HCT116 (cell line): ENCODE measurements at regions of chr1 and their contacts with region 1.

Region 1: DNA sequence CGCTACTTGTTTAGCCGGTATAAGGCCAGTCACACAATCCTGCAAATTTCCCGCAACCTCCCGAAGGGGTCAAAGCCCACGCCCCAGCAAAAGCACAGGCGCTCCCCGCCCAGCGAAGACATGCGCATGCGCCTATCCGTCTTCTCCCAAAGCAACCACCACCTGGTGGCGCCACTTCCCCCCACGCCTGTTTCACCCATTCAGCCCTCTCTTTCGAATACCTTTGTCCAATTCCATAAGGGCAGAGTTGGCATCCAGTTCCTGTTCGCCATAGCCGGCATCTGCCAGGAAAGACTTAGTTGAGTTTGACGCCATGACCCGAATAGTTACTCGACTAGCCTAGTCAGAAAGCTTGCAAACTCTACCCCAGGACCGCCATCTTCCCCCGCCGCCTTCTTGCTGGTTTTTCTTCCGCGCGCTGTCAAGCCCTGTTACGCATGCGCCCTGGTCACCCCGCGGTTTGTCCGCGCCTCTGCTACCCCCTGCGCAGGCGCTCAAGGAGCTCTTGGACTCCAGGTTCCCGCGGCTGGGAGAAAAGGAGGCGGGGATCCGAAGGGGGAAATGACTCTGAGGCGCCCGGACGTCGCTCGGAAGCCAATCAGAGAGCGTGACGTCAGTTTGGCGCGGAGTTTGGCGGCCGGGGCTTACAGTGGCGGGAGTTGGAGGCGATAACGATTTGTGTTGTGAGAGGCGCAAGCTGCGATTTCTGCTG is at the starts of genes DTL and INTS7:
- DNase-seq: peak; percentile 98
- ATAC-seq: peak; percentile 88
- H3K4me3 ChIP-seq: peak within 1 kb of the TSS; percentile 88
- H3K27ac ChIP-seq: peak within 1 kb of the TSS; percentile 71
- H3K4me1 ChIP-seq: peaks cover 18 to 41% of the 10 kb centered on the region in 2 experiments
- H3K27me3 ChIP-seq: no peaks in the 10 kb centered on the region
- CTCF ChIP-seq: peak in 2 of 3 experiments; percentile 63 to 83; a peak in 5 of 6 replicates
- POLR2A ChIP-seq: peak; percentile 86
- RAD21 ChIP-seq: peak; percentile 25; the same call in 1 of the 2 replicates
- total RNA-seq, gene DTL: 41.0 TPM
- total RNA-seq, gene INTS7: 21.7 TPM

Region 2: GRCh38 chr1:210366767-210367166 is 1668.5 kb before region 1 on chr1:
- CTCF ChIA-PET with region 1: no interaction called
- POLR2A ChIA-PET with region 1: no interaction called
- RAD21 ChIA-PET with region 1: no interaction called
- intact Hi-C with region 1: loop called (anchors 5 kb)
- DNase-seq: no peak
- ATAC-seq: no peak
- H3K4me3 ChIP-seq: no peak overlapping the region
- H3K27ac ChIP-seq: no peak overlapping the region
- H3K4me1 ChIP-seq: no peaks in the 10 kb centered on the region
- H3K27me3 ChIP-seq: no peaks in the 10 kb centered on the region
- CTCF ChIP-seq: no peak
- POLR2A ChIP-seq: no peak
- RAD21 ChIP-seq: no peak

Region 3: GRCh38 chr1:211698161-211699026 is 336.9 kb before region 1 on chr1:
- CTCF ChIA-PET with region 1: interaction called, 42 read pairs
- POLR2A ChIA-PET with region 1: interaction called, 5 read pairs
- RAD21 ChIA-PET with region 1: interaction called, 3 to 4 read pairs
- intact Hi-C with region 1: loop called (anchors 1 kb)
- DNase-seq: peak; percentile 69
- ATAC-seq: peak; percentile 98
- H3K4me3 ChIP-seq: 0 out of 4 replicates have a peak overlapping the region, but pooled peaks of 1 of the 2 experiments have one; percentile 11
- H3K27ac ChIP-seq: no peak overlapping the region
- H3K4me1 ChIP-seq: peaks cover 0 to 12% of the 10 kb centered on the region in 2 experiments; a peak in 2 of 4 replicates
- H3K27me3 ChIP-seq: no peaks in the 10 kb centered on the region
- CTCF ChIP-seq: peak; percentile 99
- POLR2A ChIP-seq: no peak
- RAD21 ChIP-seq: peak; percentile 99

Region 4: DNA sequence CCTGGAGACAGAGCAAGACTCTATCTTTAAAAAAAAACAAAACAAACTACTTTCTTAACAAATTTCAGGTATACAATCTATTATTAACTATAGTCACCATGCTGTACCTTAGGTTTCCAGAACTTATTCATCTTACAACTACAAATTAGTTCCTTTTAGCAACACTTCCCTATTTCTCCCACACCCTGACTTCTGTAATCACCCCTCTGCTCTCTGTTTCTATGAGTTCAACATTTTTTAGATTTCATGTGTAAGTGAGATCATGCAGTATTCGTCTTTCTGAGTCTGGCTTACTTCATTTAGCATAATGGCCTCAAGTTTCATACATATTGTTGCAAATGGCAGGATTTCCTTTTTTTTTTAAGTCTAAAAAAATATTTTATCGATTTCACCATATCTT is 126.8 kb before region 1 on chr1:
- CTCF ChIA-PET with region 1: no interaction called
- POLR2A ChIA-PET with region 1: no interaction called
- RAD21 ChIA-PET with region 1: no interaction called
- intact Hi-C with region 1: no loop called
- DNase-seq: no peak
- ATAC-seq: no peak
- H3K4me3 ChIP-seq: no peak overlapping the region
- H3K27ac ChIP-seq: no peak overlapping the region
- H3K4me1 ChIP-seq: peaks cover 7 to 10% of the 10 kb centered on the region in 2 experiments; a peak in 3 of 4 replicates
- H3K27me3 ChIP-seq: no peaks in the 10 kb centered on the region
- CTCF ChIP-seq: no peak
- POLR2A ChIP-seq: no peak
- RAD21 ChIP-seq: no peak

Region 5: DNA sequence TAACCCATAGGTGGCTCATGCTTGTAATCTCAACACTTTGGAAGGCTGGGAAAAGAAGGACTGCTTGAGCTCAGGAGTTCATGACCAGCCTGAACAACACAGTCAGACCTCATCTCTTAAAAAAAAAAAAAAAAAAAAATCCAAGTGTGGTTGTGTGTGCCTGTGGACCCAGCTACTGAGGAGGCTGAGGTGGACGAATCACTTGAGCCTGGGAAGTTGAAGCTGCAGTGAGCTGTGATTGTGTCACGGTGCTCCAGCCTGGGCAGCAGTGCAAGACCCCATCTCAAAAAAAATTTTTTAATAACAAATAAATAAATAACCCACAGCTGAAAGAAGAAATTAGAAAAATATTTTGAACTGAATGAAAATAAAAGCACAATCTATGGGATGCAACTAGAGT is 13.7 kb before region 1 on chr1:
- CTCF ChIA-PET with region 1: interaction called, 12 read pairs
- POLR2A ChIA-PET with region 1: interaction called, 3 read pairs
- RAD21 ChIA-PET with region 1: no interaction called
- intact Hi-C with region 1: no loop called
- DNase-seq: no peak
- ATAC-seq: no peak
- H3K4me3 ChIP-seq: no peak overlapping the region
- H3K27ac ChIP-seq: no peak overlapping the region
- H3K4me1 ChIP-seq: no peaks in the 10 kb centered on the region
- H3K27me3 ChIP-seq: no peaks in the 10 kb centered on the region
- CTCF ChIP-seq: no peak
- POLR2A ChIP-seq: no peak
- RAD21 ChIP-seq: no peak

Region 6: GRCh38 chr1:212070720-212071302 is 35.5 kb after region 1 on chr1:
- CTCF ChIA-PET with region 1: interaction called, 18 read pairs
- POLR2A ChIA-PET with region 1: no interaction called
- RAD21 ChIA-PET with region 1: no interaction called
- intact Hi-C with region 1: no loop called
- DNase-seq: peak; percentile 13
- ATAC-seq: peak; percentile 66
- H3K4me3 ChIP-seq: no peak overlapping the region
- H3K27ac ChIP-seq: no peak overlapping the region
- H3K4me1 ChIP-seq: no peaks in the 10 kb centered on the region
- H3K27me3 ChIP-seq: no peaks in the 10 kb centered on the region
- CTCF ChIP-seq: peak; percentile 56 to 87 (median 73)
- POLR2A ChIP-seq: no peak
- RAD21 ChIP-seq: peak; percentile 94

Region 7: GRCh38 chr1:212291505-212292134 is 256.3 kb after region 1 on chr1:
- CTCF ChIA-PET with region 1: interaction called, 12 read pairs
- POLR2A ChIA-PET with region 1: no interaction called
- RAD21 ChIA-PET with region 1: no interaction called
- intact Hi-C with region 1: no loop called
- DNase-seq: peak; percentile 27
- ATAC-seq: peak; percentile 87
- H3K4me3 ChIP-seq: no peak overlapping the region
- H3K27ac ChIP-seq: peak overlapping the region; percentile 66
- H3K4me1 ChIP-seq: peaks cover 31 to 42% of the 10 kb centered on the region in 2 experiments
- H3K27me3 ChIP-seq: no peaks in the 10 kb centered on the region
- CTCF ChIP-seq: peak; percentile 71 to 81 (median 76); a peak in 5 of 6 replicates
- POLR2A ChIP-seq: no peak
- RAD21 ChIP-seq: peak; percentile 88